Gastrocnemius medialis (tissue), 4 donors: ENCODE measurements at regions of chr15 and their contacts with region 1.

Region 1: GRCh38 chr15:80526556-80527340 is 122.6 kb downstream of the ARNT2 start:
- DNase-seq: peak in 1 of 2 donors; percentile 33
- ATAC-seq: peak; percentile 75 to 87
- H3K4me3 ChIP-seq: no peak overlapping the region
- H3K27ac ChIP-seq: no peak overlapping the region
- H3K4me1 ChIP-seq: peaks cover 11 to 14% of the 10 kb centered on the region in 2 donors
- H3K27me3 ChIP-seq: no peaks in the 10 kb centered on the region
- CTCF ChIP-seq: no peak
- POLR2A ChIP-seq: no peak

Region 2: GRCh38 chr15:79447060-79447459 is 1079.7 kb before region 1 on chr15:
- in situ Hi-C with region 1: no loop called
- intact Hi-C with region 1: loop called (anchors 5 kb)
- DNase-seq: no peak
- ATAC-seq: no peak
- H3K4me3 ChIP-seq: no peak overlapping the region
- H3K27ac ChIP-seq: no peak overlapping the region
- H3K4me1 ChIP-seq: peaks cover 10 to 11% of the 10 kb centered on the region in 2 donors
- H3K27me3 ChIP-seq: peaks cover 0 to 12% (median 12%) of the 10 kb centered on the region in 3 donors
- CTCF ChIP-seq: no peak
- POLR2A ChIP-seq: no peak